A673 (cell line): ENCODE measurements at regions of chr5 and their contacts with region 1.

Region 1: GRCh38 chr5:122673343-122673742 is 101.5 kb upstream of the SNX2 start:
- DNase-seq: no peak
- H3K4me3 ChIP-seq: no peak overlapping the region
- H3K27ac ChIP-seq: no peak overlapping the region
- H3K4me1 ChIP-seq: no peaks in the 10 kb centered on the region
- H3K27me3 ChIP-seq: peaks cover 11% of the 10 kb centered on the region
- CTCF ChIP-seq: no peak

Region 2: DNA sequence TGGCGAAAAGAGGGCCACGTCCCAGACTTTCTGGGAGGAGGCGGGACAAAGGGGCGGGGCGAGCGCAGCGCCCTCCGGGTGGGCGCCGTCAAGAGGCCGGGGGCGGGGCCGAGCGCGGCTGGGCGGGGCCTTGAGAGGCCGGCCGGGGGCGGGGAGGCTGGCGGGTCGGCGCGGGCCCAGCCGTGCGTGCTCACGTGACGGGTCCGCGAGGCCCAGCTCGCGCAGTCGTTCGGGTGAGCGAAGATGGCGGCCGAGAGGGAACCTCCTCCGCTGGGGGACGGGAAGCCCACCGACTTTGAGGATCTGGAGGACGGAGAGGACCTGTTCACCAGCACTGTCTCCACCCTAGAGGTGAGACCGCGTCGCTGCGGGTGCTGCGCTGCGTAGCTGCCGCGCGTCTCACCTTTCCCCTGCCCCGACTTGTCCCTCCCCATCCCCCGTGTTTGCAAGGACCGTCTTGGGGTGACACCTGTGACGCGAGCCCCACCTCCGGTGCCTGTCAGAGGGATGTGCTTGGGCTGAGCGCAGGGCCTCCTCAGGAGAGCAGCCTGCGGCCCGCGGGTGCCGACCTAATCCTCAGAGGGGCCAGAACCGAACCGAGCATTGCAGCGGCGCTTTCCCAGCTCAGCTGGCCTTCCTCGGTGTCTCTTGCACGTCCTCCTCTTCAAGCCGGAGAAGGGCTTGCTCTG is 101.7 kb after region 1 on chr5 and contains the start of gene SNX2:
- CTCF ChIA-PET with region 1: no interaction called
- POLR2A ChIA-PET with region 1: no interaction called
- intact Hi-C with region 1: no loop called
- DNase-seq: peak; percentile 93
- H3K4me3 ChIP-seq: peak within 1 kb of the TSS; percentile 98
- H3K27ac ChIP-seq: peak within 1 kb of the TSS; percentile 76
- H3K4me1 ChIP-seq: no peaks in the 10 kb centered on the region
- H3K27me3 ChIP-seq: no peaks in the 10 kb centered on the region
- CTCF ChIP-seq: no peak
- total RNA-seq, gene SNX2: 64.3 and 67.9 TPM in 2 replicates

Region 3: DNA sequence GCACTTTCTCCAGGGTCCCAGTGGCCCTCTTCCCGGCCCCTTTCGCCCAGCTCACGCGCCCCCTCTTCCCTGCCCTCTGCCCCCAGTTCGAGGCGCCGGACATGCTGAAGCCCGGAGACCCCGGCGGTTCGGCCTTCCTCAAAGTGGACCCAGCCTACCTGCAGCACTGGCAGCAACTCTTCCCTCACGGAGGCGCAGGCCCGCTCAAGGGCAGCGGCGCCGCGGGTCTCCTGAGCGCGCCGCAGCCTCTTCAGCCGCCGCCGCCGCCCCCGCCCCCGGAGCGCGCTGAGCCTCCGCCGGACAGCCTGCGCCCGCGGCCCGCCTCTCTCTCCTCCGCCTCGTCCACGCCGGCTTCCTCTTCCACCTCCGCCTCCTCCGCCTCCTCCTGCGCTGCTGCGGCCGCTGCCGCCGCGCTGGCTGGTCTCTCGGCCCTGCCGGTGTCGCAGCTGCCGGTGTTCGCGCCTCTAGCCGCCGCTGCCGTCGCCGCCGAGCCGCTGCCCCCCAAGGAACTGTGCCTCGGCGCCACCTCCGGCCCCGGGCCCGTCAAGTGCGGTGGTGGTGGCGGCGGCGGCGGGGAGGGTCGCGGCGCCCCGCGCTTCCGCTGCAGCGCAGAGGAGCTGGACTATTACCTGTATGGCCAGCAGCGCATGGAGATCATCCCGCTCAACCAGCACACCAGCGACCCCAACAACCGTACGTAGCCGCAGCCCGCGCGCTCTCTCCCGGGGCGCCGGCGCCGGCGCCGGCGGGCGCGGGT is 416.7 kb after region 1 on chr5:
- CTCF ChIA-PET with region 1: no interaction called
- POLR2A ChIA-PET with region 1: interaction called, 16 read pairs
- intact Hi-C with region 1: no loop called
- DNase-seq: no peak
- H3K4me3 ChIP-seq: peak overlapping the region; percentile 38
- H3K27ac ChIP-seq: no peak overlapping the region
- H3K4me1 ChIP-seq: peaks cover 5% of the 10 kb centered on the region
- H3K27me3 ChIP-seq: peaks cover 99% of the 10 kb centered on the region
- CTCF ChIP-seq: no peak